PC-9 (cell line): ENCODE measurements at regions of chr7 and their contacts with region 1.

Region 1: GRCh38 chr7:45146531-45147379 is 10.8 kb upstream of the RAMP3 start:
- DNase-seq: peak in 1 of 2 experiments; percentile 16
- H3K4me3 ChIP-seq: no peak overlapping the region
- H3K27ac ChIP-seq: no peak overlapping the region
- H3K4me1 ChIP-seq: no peaks in the 10 kb centered on the region
- H3K27me3 ChIP-seq: peaks cover 51% of the 10 kb centered on the region
- CTCF ChIP-seq: no peak

Region 2: GRCh38 chr7:45174966-45175765 is 28.4 kb after region 1 on chr7:
- CTCF ChIA-PET with region 1: no interaction called
- POLR2A ChIA-PET with region 1: no interaction called
- intact Hi-C with region 1: no loop called
- DNase-seq: no peak
- H3K4me3 ChIP-seq: no peak overlapping the region
- H3K27ac ChIP-seq: no peak overlapping the region
- H3K4me1 ChIP-seq: no peaks in the 10 kb centered on the region
- H3K27me3 ChIP-seq: peaks cover 81% of the 10 kb centered on the region
- CTCF ChIP-seq: no peak

Region 3: DNA sequence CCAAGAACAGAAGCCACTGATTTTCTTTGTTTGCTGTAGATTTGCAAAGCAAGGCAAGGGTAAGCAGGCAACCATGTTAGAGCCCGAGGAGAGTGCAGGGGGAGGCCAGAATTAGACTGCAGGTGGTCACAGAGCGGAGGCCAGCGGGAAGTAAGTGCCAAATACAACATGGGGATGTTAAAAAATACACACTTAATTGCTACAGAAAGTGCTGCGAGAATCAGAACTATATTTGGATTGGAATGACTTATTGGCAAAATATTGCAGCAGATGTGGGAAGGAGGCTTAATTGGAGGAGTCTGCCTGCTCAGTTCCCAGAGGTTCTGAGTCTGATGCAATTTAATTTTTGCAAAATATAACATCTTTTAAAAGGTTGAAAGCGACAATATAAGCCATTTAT is 377.7 kb after region 1 on chr7:
- CTCF ChIA-PET with region 1: no interaction called
- POLR2A ChIA-PET with region 1: no interaction called
- intact Hi-C with region 1: no loop called
- DNase-seq: no peak
- H3K4me3 ChIP-seq: no peak overlapping the region
- H3K27ac ChIP-seq: no peak overlapping the region
- H3K4me1 ChIP-seq: no peaks in the 10 kb centered on the region
- H3K27me3 ChIP-seq: peaks cover 55% of the 10 kb centered on the region
- CTCF ChIP-seq: no peak

Region 4: GRCh38 chr7:46230996-46231315 is 1084.2 kb after region 1 on chr7:
- CTCF ChIA-PET with region 1: no interaction called
- POLR2A ChIA-PET with region 1: interaction called, 11 read pairs
- intact Hi-C with region 1: no loop called
- DNase-seq: no peak
- H3K4me3 ChIP-seq: no peak overlapping the region
- H3K27ac ChIP-seq: no peak overlapping the region
- H3K4me1 ChIP-seq: peaks cover 23% of the 10 kb centered on the region
- H3K27me3 ChIP-seq: no peaks in the 10 kb centered on the region
- CTCF ChIP-seq: no peak